HEK293T (cell line): ENCODE measurements at regions of chr17 and their contacts with region 1.

Region 1: GRCh38 chr17:16521070-16521727 is 29.2 kb upstream of the LRRC75A start:
- DNase-seq: peak; percentile 85

Region 2: GRCh38 chr17:16269658-16270057 is 251.5 kb before region 1 on chr17:
- CTCF ChIA-PET with region 1: no interaction called
- POLR2A ChIA-PET with region 1: no interaction called
- DNase-seq: no peak

Region 3: GRCh38 chr17:16428098-16428882 is 92.9 kb before region 1 on chr17:
- CTCF ChIA-PET with region 1: interaction called, 22 read pairs
- POLR2A ChIA-PET with region 1: interaction called, 6 read pairs
- DNase-seq: peak; percentile 77

Region 4: GRCh38 chr17:16449121-16449570 is 72.1 kb before region 1 on chr17:
- CTCF ChIA-PET with region 1: interaction called, 70 read pairs
- POLR2A ChIA-PET with region 1: interaction called, 8 read pairs
- DNase-seq: no peak

Region 5: DNA sequence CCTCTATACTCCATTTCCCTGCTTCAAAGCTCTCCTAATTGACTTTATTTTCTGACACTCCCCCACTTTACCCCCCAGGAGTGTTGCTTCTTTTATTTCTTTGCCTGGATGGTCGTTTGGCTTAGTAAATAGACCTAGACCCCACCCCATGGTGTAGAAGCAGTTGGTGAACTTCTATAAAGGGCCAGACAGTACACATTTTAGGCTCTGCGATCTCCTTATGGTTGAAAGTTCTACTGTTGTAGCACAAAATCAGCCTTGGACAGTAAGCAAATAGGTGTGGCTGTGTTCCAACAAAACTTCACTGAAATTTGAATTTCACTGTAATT is 15.9 kb after region 1 on chr17:
- CTCF ChIA-PET with region 1: interaction called, 3 read pairs
- POLR2A ChIA-PET with region 1: interaction called, 21 read pairs
- DNase-seq: no peak

Region 6: DNA sequence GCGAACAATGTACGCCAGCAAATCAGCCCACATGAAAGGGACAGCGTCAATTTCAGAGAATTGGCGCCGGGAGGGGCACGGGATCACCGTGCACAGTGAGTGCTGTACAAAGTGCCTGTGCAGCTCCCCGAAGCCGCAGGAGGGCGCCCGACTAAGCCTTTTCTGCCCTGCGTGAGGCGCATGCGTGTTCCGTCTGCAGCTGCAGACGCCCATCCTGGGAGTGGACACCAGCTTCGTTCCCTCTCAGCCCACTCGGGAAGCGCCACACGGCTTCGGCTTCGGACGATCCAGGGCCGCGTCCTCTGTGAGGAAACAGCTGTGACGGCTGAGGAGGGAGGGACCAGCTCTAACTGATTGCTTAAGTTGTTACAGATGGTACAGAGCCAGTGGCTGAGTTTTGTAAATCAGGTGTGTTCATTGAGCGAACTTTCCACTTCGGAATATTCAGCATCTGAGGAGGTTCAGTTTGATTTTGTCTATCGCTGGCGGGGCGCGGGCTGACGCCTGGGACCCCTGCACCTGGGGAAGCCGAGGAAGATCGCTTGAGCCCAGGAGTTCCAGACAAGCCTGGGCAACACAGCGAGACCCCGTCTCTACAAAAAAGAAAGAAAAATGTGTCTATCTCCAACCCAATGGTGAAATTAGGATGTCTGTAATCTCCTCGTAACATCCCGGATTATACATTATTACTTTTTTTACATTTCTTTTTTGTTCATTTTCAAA is 63.2 kb after region 1 on chr17:
- CTCF ChIA-PET with region 1: no interaction called
- POLR2A ChIA-PET with region 1: no interaction called
- DNase-seq: no peak